ENCODE measurements at regions of chr4 and their contacts with region 1.

Region 1: DNA sequence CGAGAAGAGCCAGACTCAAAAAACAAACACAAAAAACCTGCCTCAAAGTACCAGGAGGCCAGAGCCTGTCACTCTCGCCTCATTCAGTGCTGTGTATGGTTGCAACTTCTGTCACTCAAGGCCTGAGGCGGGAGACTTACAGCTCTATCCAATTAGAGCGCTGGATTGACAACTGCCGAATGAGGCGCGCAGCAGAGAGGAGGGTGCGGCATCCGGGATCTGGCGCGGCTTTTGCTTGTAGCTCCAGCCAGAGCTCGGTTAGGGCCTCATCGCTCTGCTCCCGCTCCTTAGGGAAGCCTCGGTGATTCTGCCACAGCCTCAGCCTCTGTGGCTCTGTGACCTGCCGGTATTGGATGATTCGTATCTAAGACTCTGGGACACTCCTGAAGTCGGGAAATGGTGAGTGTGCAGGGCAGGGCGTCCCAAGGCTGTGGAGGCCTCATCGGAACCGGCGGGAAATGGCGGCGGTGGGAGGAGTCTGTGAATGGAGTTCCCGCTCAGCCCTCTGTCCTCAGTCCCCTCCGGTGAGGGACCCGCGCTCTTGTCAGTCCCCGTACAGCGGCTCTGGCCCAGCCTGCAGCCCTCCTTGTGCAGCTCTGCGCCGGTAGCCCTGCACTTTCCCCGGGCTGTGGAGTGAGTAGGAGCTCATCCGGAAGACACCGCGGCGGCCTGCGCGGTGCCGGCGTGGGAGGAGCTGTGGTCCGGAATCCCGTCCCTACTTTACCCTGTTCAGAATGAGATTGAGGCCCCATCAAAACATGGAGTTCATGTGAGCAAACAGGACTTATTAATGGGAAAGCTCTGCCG is at the start of gene ZNF718:
- DNase-seq: peak; percentile 95
- H3K4me3 Mint-ChIP-seq: peak within 1 kb of the TSS; percentile 97
- H3K27ac Mint-ChIP-seq: peak within 1 kb of the TSS; percentile 97
- H3K4me1 Mint-ChIP-seq: peaks cover 34% of the 10 kb centered on the region
- H3K27me3 Mint-ChIP-seq: no peaks in the 10 kb centered on the region
- total RNA-seq, gene ZNF718: 8.8 to 8.9 TPM

Region 2: GRCh38 chr4:107444-108429 is 16.7 kb before region 1 on chr4:
- CTCF ChIA-PET with region 1: no interaction called
- POLR2A ChIA-PET with region 1: no interaction called
- DNase-seq: no peak
- H3K4me3 Mint-ChIP-seq: no peak overlapping the region
- H3K27ac Mint-ChIP-seq: no peak overlapping the region
- H3K4me1 Mint-ChIP-seq: no peaks in the 10 kb centered on the region
- H3K27me3 Mint-ChIP-seq: peaks cover 19% of the 10 kb centered on the region

Region 3: GRCh38 chr4:138935-139334 is 14.5 kb after region 1 on chr4:
- CTCF ChIA-PET with region 1: interaction called, 3 read pairs
- POLR2A ChIA-PET with region 1: interaction called, 34 read pairs
- DNase-seq: no peak
- H3K4me3 Mint-ChIP-seq: no peak overlapping the region
- H3K27ac Mint-ChIP-seq: no peak overlapping the region
- H3K4me1 Mint-ChIP-seq: peaks cover 8% of the 10 kb centered on the region
- H3K27me3 Mint-ChIP-seq: no peaks in the 10 kb centered on the region

Region 4: DNA sequence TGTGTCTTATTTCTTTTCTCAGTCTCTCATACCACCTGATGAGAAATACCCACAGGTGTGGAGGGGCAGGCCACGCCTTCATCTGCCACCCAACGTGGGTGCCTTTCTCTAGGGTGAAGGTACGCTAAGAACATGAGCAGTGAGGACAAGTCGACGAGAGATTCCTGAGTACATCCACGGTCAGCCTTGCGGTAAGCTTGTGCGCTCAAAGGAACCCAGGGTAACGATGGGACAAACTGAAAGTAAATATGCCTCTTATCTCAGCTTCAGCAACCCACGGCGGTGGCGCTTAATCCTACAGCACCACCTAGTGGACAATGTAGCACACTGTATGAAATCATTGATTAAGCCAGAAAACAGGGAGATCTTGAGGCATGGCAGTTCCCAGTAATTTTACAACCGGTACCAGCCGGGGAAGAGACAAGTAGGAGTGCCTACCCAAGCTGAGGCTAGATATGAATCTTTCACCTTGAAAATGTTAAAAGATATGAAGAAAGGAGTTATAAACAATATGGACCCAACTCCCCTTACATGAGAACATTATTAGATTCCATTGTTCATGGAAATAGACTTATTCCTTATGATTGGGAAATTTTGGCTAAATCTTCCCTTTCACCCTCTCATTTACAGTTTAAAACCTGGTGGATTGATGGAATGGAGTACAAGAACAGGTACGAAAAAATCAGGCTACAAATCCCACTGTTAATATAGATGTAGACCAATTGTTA is 117.8 kb after region 1 on chr4:
- CTCF ChIA-PET with region 1: no interaction called
- POLR2A ChIA-PET with region 1: interaction called, 11 read pairs
- DNase-seq: peak; percentile 78
- H3K4me3 Mint-ChIP-seq: peak overlapping the region; percentile 79
- H3K27ac Mint-ChIP-seq: peak overlapping the region; percentile 38
- H3K4me1 Mint-ChIP-seq: peaks cover 9% of the 10 kb centered on the region
- H3K27me3 Mint-ChIP-seq: no peaks in the 10 kb centered on the region

Region 5: GRCh38 chr4:473570-474457 is 349.3 kb after region 1 on chr4:
- CTCF ChIA-PET with region 1: interaction called, 7 read pairs
- POLR2A ChIA-PET with region 1: interaction called, 19 read pairs
- DNase-seq: peak; percentile 95
- H3K4me3 Mint-ChIP-seq: peak overlapping the region; percentile 86
- H3K27ac Mint-ChIP-seq: peak overlapping the region; percentile 88
- H3K4me1 Mint-ChIP-seq: peaks cover 44% of the 10 kb centered on the region
- H3K27me3 Mint-ChIP-seq: no peaks in the 10 kb centered on the region